ENCODE measurements at regions of chr5 and their contacts with region 1.

Region 1: DNA sequence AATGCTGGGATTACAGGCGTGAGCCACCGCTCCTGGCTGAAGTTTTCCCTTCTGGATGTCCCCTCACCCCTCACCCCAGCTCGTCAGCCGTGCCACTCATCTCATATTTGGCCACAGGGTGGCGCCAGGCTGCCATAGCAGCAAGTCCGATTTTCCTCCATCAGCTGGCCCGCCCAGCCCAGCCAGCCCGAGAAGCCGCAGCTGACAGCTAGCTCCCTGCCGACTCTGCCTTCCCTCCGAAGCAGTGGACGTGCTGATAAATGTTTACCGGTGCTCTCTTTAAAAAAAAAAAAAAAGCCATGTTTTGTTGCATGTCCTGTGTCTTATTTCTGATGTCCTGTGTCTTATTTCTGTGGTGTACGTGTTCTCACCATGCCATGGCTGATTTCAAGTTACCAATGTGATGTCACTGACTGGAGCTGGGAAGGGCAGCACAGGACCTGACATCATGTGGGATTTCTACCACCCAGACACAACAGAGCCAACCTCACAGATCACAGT is 58.3 kb downstream of the PFDN1 start:
- DNase-seq: peak; percentile 89 to 90
- H3K4me3 ChIP-seq: no peak overlapping the region
- H3K4me3 Mint-ChIP-seq: no peak overlapping the region
- H3K27ac Mint-ChIP-seq: peak overlapping the region; percentile 39
- H3K4me1 ChIP-seq: peaks cover 22% of the 10 kb centered on the region
- H3K4me1 Mint-ChIP-seq: peaks cover 6% of the 10 kb centered on the region
- H3K27me3 ChIP-seq: no peaks in the 10 kb centered on the region
- H3K27me3 Mint-ChIP-seq: no peaks in the 10 kb centered on the region
- CTCF ChIP-seq: peak; percentile 85 to 87

Region 2: DNA sequence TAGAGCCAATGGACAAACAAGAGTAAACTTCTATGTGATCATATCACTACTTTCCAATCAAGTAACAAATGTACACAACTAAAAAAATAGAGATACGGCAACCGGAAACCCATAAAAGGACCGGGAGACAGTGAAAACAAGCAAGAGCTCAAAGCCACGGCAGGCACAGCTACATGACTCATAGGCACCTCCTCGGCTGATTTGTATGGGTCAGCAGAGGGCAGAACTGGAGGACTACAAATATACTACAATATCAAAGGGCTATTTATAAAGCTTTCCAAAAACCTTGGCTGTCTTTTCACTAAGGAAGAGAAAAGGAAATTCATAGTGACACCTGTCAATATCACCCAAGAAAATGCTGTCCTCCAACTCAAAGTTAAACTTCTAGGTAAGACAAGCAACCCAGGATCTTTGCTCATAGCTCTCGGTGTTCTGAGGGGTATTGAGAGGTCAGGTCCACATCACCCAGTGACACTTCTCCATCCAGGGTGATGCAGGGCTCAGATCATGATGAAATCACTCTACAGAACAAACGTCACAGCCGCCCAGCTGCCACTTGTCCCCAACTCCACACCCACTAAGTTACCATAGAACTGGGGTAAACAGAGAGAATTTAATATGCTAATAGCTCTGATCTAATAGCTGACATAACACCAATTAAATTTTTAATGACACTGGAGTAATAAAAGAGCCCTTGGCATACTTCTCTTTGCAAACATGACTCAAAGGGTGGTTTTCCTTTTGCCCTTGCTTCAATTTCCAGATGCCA is 17.0 kb after region 1 on chr5:
- CTCF ChIA-PET with region 1: interaction called, 19 read pairs
- POLR2A ChIA-PET with region 1: no interaction called
- intact Hi-C with region 1: no loop called
- DNase-seq: peak; percentile 73 to 76
- H3K4me3 ChIP-seq: no peak overlapping the region
- H3K4me3 Mint-ChIP-seq: peak overlapping the region; percentile 12
- H3K27ac Mint-ChIP-seq: peak overlapping the region; percentile 64
- H3K4me1 ChIP-seq: peaks cover 11% of the 10 kb centered on the region
- H3K4me1 Mint-ChIP-seq: peaks cover 35% of the 10 kb centered on the region
- H3K27me3 ChIP-seq: no peaks in the 10 kb centered on the region
- H3K27me3 Mint-ChIP-seq: no peaks in the 10 kb centered on the region
- CTCF ChIP-seq: peak in 1 of 2 experiments; percentile 11

Region 3: DNA sequence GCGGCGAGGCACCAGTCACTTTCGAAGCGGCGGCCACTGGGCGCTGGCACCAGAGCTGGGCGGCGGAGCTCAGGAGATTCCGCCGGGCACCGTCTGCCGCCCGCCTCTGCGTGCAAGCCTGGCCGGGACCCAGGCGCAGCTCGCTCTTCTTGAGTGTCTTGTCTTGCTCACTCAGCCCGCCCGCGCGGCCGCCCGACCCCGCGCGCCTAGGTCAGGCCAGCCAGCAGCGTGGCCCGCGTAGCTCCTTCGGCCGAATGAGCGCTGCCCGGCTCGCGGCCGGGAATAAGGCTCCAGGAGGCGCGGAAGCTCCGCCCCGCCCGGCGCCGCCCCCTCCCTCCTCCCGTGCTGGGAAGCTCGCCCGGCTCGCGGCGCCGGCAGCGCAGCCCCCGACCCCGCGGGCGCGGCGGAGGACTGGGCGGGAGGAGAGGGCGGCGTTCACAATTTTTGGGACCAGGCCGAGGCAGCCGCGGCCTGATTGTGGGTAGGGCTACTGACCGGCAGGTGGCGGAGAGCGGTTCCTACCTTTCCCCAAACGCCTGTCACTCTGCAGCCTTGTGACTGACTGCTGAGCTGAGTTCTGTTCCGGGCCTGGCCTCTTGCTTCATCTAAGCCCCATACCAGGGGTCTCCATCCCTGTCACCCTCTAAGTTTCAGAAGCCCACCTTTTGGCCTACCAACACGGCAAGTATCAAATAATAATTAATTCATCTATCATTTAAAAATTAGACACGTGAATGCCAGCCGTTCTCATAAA is 102.0 kb after region 1 on chr5 and contains the start of gene HBEGF:
- CTCF ChIA-PET with region 1: interaction called, 105 read pairs
- POLR2A ChIA-PET with region 1: interaction called, 25 read pairs
- intact Hi-C with region 1: loop called (anchors 1 kb)
- DNase-seq: peak; percentile 92 to 96
- H3K4me3 ChIP-seq: peak within 1 kb of the TSS; percentile 86
- H3K4me3 Mint-ChIP-seq: peak within 1 kb of the TSS; percentile 71
- H3K27ac Mint-ChIP-seq: peak within 1 kb of the TSS; percentile 45
- H3K4me1 ChIP-seq: peaks cover 35% of the 10 kb centered on the region
- H3K4me1 Mint-ChIP-seq: peaks cover 32% of the 10 kb centered on the region
- H3K27me3 ChIP-seq: no peaks in the 10 kb centered on the region
- H3K27me3 Mint-ChIP-seq: no peaks in the 10 kb centered on the region
- CTCF ChIP-seq: peak; percentile 67 to 84
- total RNA-seq, gene HBEGF: 5.2 and 5.8 TPM in 2 replicates

Region 4: GRCh38 chr5:140357726-140358093 is 113.1 kb after region 1 on chr5:
- CTCF ChIA-PET with region 1: interaction called, 19 read pairs
- POLR2A ChIA-PET with region 1: no interaction called
- intact Hi-C with region 1: loop called (anchors 1 kb)
- DNase-seq: peak; percentile 88
- H3K4me3 ChIP-seq: no peak overlapping the region; the same call in 1 of the 2 replicates
- H3K4me3 Mint-ChIP-seq: peak overlapping the region; percentile 58
- H3K27ac Mint-ChIP-seq: peak overlapping the region; percentile 87
- H3K4me1 ChIP-seq: peaks cover 26% of the 10 kb centered on the region
- H3K4me1 Mint-ChIP-seq: peaks cover 22% of the 10 kb centered on the region
- H3K27me3 ChIP-seq: no peaks in the 10 kb centered on the region
- H3K27me3 Mint-ChIP-seq: no peaks in the 10 kb centered on the region
- CTCF ChIP-seq: peak; percentile 87 to 96

Measured in Caco-2 (cell line).